ENCODE measurements at regions of chr5 and their contacts with region 1.

Region 1: DNA sequence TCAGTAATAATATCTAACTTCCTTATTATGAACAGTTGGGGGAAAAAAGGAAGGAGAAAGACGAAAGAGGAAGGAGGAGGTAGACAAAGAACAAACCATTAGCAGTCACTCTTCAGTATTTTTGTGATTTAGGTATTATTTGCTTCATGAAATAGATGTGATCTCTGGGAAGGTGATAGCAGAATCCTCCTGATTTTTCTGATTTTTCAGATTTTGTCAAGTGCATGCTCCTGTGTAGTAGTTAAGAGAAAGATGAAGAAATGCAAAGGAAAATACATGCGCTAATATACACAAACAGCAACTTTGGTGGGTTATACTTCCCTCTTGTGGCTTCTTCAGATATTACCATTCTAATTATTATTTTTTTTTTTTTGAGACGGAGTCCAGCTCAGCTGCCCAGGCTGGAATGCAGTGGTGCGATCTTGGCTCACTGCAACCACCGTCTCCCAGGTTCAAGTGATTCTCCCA is 31.6 kb downstream of the LMNB1 start:
- DNase-seq: no peak
- ATAC-seq: peak; percentile 79
- H3K4me3 ChIP-seq: no peak overlapping the region
- H3K27ac ChIP-seq: no peak overlapping the region
- H3K4me1 ChIP-seq: no peaks in the 10 kb centered on the region
- H3K27me3 ChIP-seq: no peaks in the 10 kb centered on the region
- CTCF ChIP-seq: peak; percentile 35 to 49 (median 44); a peak in 3 of 6 replicates
- POLR2A ChIP-seq: no peak
- RAD21 ChIP-seq: peak; percentile 54

Region 2: GRCh38 chr5:126745259-126745992 is 63.1 kb before region 1 on chr5:
- CTCF ChIA-PET with region 1: no interaction called
- POLR2A ChIA-PET with region 1: no interaction called
- RAD21 ChIA-PET with region 1: no interaction called
- intact Hi-C with region 1: loop called (anchors 10 kb)
- DNase-seq: no peak
- ATAC-seq: no peak
- H3K4me3 ChIP-seq: no peak overlapping the region
- H3K27ac ChIP-seq: no peak overlapping the region
- H3K4me1 ChIP-seq: peaks cover 13 to 20% of the 10 kb centered on the region in 2 experiments
- H3K27me3 ChIP-seq: no peaks in the 10 kb centered on the region
- CTCF ChIP-seq: no peak
- POLR2A ChIP-seq: no peak
- RAD21 ChIP-seq: no peak

Region 3: DNA sequence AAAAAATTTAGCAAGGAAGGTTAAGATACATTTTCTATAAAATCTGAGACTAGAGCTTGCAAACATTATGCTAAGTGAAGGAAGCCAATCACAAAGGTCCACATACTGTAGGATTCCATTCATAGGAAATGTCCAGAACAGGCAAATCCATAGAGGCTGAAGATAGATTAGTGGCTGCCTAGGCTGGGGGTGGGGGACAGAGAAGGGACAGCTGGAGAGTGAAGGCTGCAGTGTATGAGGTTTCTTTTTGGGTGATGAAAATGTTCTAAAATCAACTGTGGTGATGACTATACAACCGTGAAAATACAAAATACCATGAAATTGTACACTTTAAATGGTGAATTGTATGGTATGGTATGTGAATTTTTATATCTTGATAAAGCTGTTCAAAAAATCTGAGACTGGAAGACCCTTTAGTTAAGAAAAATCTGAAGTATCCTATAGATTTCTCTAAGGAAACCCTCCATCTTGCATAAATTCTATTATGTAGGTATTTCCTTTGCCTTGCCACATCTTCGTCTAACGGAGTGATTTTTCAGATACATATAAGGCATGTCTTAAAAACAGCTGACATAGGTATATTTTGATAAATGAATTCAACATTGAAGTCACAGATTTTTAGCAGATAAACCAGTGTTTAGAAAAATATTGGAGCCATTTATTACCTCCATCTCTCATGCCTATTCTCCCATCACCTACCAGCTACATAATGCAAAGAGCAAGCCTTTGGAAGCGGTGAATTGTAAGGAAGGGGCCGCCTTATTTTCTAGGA is 89.5 kb after region 1 on chr5:
- CTCF ChIA-PET with region 1: no interaction called
- POLR2A ChIA-PET with region 1: no interaction called
- RAD21 ChIA-PET with region 1: no interaction called
- intact Hi-C with region 1: no loop called
- DNase-seq: no peak
- ATAC-seq: no peak
- H3K4me3 ChIP-seq: no peak overlapping the region
- H3K27ac ChIP-seq: no peak overlapping the region
- H3K4me1 ChIP-seq: no peaks in the 10 kb centered on the region
- H3K27me3 ChIP-seq: no peaks in the 10 kb centered on the region
- CTCF ChIP-seq: no peak
- POLR2A ChIP-seq: no peak
- RAD21 ChIP-seq: no peak

Region 4: DNA sequence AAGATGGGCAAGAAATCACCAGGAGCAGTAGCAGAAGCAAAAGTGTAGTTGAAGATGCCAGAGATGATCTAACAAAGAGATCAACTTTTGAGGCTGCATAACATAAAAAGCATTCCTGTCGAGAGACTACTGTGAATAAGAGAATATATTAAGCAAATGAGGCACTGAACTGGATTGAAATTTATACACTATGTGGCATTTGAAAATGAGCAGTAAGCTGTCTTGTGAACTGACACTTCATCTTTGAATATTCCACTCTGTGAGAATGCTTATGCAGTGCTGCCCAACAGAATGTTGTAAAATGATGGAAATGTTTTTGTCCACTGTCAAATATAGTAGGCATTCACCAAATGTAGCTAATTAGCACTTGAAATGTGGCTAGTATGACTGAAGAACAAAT is 690.0 kb after region 1 on chr5:
- CTCF ChIA-PET with region 1: no interaction called
- POLR2A ChIA-PET with region 1: no interaction called
- RAD21 ChIA-PET with region 1: no interaction called
- intact Hi-C with region 1: no loop called
- DNase-seq: no peak
- ATAC-seq: no peak
- H3K4me3 ChIP-seq: no peak overlapping the region
- H3K27ac ChIP-seq: no peak overlapping the region
- H3K4me1 ChIP-seq: no peaks in the 10 kb centered on the region
- H3K27me3 ChIP-seq: no peaks in the 10 kb centered on the region
- CTCF ChIP-seq: no peak
- POLR2A ChIP-seq: no peak
- RAD21 ChIP-seq: no peak

Measured in HCT116 (cell line).